Pancreas (tissue), 10 donors: ENCODE measurements at regions of chr16 and their contacts with region 1.

Region 1: DNA sequence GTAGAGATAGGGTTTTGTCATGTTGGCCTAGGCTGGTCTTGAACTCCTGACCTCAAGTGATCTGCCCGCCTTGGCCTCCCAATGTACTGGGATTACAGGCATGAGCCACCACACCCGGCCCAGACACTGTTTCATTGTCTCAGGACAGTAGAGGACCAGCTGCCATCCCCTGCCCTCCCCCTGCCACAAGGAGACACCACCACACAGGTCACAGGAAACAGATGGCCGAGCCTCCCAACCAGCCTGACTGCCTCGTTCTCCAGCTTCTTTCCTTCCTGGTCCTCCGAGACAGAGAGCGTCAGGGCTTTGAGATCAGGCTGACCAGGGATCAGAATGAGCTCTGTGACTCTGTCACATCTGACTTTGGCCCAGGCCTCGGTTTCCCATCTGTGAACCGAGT is 20.8 kb upstream of the RNPS1 start:
- DNase-seq: no peak
- ATAC-seq: no peak
- H3K4me3 ChIP-seq: no peak overlapping the region
- H3K27ac ChIP-seq: no peak overlapping the region
- H3K4me1 ChIP-seq: no peaks in the 10 kb centered on the region
- H3K27me3 ChIP-seq: no peaks in the 10 kb centered on the region
- CTCF ChIP-seq: no peak

Region 2: GRCh38 chr16:2429034-2429770 is 140.5 kb after region 1 on chr16 and contains the start of gene CCNF:
- intact Hi-C with region 1: loop called in 1 of 3 experiments (anchors 10 kb)
- DNase-seq: peak; percentile 97 to 99 (median 98)
- ATAC-seq: peak; percentile 95 to 98 (median 96)
- H3K4me3 ChIP-seq: peak within 1 kb of the TSS; percentile 83 to 94 (median 90)
- H3K27ac ChIP-seq: peak within 1 kb of the TSS in 3 of 4 donors; percentile 46 to 76 (median 73)
- H3K4me1 ChIP-seq: peaks cover 0 to 6% (median 6%) of the 10 kb centered on the region in 3 donors
- H3K27me3 ChIP-seq: no peaks in the 10 kb centered on the region
- CTCF ChIP-seq: no peak
- total RNA-seq, gene CCNF: 0.69 to 2.6 (median 1.3) TPM

Region 3: GRCh38 chr16:3214904-3215600 is 926.3 kb after region 1 on chr16:
- intact Hi-C with region 1: no loop called
- DNase-seq: no peak
- ATAC-seq: no peak
- H3K4me3 ChIP-seq: no peak overlapping the region
- H3K27ac ChIP-seq: no peak overlapping the region
- H3K4me1 ChIP-seq: no peaks in the 10 kb centered on the region
- H3K27me3 ChIP-seq: peaks cover 0 to 3% (median 0%) of the 10 kb centered on the region in 4 donors
- CTCF ChIP-seq: no peak